Endothelial cell of umbilical vein (primary cell): ENCODE measurements at regions of chr7 and their contacts with region 1.

Region 1: GRCh38 chr7:122528879-122529481 is 169.9 kb downstream of the RNF133 start:
- DNase-seq: peak; percentile 68
- H3K4me3 ChIP-seq: no peak overlapping the region
- H3K27ac ChIP-seq: no peak overlapping the region
- H3K4me1 ChIP-seq: no peaks in the 10 kb centered on the region
- H3K27me3 ChIP-seq: no peaks in the 10 kb centered on the region
- CTCF ChIP-seq: peak; percentile 26 to 28
- POLR2A ChIP-seq: no peak

Region 2: DNA sequence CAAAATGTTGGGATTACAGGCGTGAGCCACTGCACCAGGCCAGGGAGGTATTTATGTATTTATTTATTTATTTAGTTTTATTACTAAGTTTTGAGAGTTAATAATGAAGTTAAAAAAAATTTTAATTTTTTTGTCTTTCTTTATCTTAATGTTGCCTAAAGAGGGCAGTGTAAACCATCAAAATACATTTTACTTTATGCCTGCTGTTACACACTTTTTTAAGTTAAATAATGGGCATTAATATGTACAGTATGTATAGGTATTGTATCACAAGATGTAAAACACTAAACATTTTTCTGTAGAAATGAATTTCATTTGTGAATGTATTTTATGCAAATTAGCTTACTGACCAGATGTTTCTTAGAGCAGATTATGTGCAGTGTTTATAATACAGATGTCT is 514.3 kb before region 1 on chr7:
- CTCF ChIA-PET with region 1: interaction called, 8 read pairs
- POLR2A ChIA-PET with region 1: no interaction called
- dilution Hi-C with region 1: no loop called
- intact Hi-C with region 1: loop called (anchors 2 kb)
- DNase-seq: peak; percentile 7
- H3K4me3 ChIP-seq: no peak overlapping the region
- H3K27ac ChIP-seq: no peak overlapping the region
- H3K4me1 ChIP-seq: no peaks in the 10 kb centered on the region
- H3K27me3 ChIP-seq: no peaks in the 10 kb centered on the region
- CTCF ChIP-seq: no peak
- POLR2A ChIP-seq: no peak

Region 3: DNA sequence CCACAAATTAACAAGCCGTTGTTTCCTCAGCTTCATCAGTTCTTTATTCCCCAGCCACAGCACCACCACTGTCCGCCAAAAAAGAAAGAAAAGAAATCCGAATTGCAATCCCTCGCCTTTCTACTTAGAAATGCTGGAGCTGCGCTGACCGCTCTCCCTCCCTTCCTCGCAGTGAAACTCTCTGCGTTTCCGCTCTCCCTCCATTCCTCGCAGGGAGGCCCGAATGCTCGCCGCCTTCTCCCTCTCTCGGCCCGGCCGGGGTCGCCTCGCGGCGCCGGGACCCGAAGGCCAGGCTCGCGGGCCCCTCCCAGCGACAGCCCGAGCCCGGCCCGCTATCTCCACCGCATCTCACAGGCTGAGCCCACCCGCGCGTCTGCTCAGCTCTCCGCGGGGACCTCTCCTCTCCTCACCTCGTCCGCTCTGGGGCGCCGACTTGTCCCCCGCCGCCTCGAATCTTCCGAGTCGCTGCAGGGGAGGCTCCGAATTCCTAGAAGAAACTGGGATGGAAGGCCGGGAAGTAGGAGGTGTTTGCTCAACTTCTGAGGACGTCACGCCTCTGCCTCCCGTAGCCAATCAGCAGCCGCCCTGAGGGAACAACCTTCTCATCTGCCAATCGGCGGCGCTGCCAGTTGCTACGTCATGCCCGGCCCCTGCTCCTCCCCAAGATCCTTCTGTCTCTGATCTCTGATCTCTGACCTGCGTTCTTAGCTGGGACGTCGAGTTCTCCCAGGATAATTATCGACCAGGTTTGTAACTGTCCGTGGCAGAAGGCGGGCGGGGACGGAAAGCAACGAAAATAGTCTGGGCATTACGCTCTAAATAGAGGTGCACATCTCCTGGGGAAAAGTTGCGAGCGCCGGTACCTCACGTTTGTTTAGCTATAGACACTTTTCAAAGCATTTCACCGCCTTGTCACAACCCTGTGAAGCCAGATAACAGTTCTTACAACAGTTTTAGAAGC is 384.9 kb before region 1 on chr7 and contains the start of gene AASS:
- CTCF ChIA-PET with region 1: interaction called, 3 read pairs
- POLR2A ChIA-PET with region 1: no interaction called
- dilution Hi-C with region 1: no loop called
- intact Hi-C with region 1: loop called (anchors 5 kb)
- DNase-seq: peak; percentile 96
- H3K4me3 ChIP-seq: peak within 1 kb of the TSS; percentile 68 to 92 (median 81)
- H3K27ac ChIP-seq: peak within 1 kb of the TSS; percentile 58
- H3K4me1 ChIP-seq: peaks cover 16% of the 10 kb centered on the region
- H3K27me3 ChIP-seq: no peaks in the 10 kb centered on the region
- CTCF ChIP-seq: no peak
- POLR2A ChIP-seq: peak; percentile 71
- total RNA-seq, gene AASS: 27.8 and 30.1 TPM in 2 replicates

Region 4: DNA sequence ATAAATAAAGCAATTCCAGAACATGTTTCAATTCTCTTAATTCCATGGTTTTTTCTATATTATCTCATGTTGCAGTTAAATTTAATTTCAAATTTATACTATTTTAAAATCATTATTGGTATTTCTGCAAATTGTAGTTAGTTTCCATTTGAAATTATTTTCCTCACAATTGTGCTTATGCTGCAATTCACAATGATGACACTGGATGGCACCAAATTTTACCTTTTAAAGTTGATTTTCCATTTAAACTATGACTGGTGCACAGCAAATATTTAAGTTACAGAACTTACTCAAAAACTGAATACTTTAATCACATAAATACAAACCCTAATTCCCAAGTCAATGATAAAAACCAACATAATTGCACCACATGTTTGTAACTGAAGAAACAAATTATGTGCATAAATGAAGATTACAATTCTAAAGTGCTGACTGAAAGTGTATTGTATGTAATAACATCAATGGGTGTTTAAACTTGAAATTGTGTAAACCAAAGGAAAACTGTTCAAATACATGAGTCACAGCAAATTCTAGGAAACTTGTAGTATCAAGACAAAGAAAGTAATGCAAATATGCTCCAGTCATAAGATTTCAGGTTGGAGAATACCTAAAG is 309.6 kb before region 1 on chr7:
- CTCF ChIA-PET with region 1: interaction called, 375 read pairs
- POLR2A ChIA-PET with region 1: no interaction called
- dilution Hi-C with region 1: no loop called
- intact Hi-C with region 1: loop called (anchors 1 kb)
- DNase-seq: peak; percentile 56
- H3K4me3 ChIP-seq: no peak overlapping the region
- H3K27ac ChIP-seq: no peak overlapping the region
- H3K4me1 ChIP-seq: no peaks in the 10 kb centered on the region
- H3K27me3 ChIP-seq: no peaks in the 10 kb centered on the region
- CTCF ChIP-seq: peak; percentile 30 to 33
- POLR2A ChIP-seq: no peak

Region 5: GRCh38 chr7:122290476-122290875 is 238.5 kb before region 1 on chr7:
- CTCF ChIA-PET with region 1: interaction called, 6 read pairs
- POLR2A ChIA-PET with region 1: no interaction called
- dilution Hi-C with region 1: no loop called
- intact Hi-C with region 1: loop called (anchors 5 kb)
- DNase-seq: no peak
- H3K4me3 ChIP-seq: no peak overlapping the region
- H3K27ac ChIP-seq: no peak overlapping the region
- H3K4me1 ChIP-seq: no peaks in the 10 kb centered on the region
- H3K27me3 ChIP-seq: peaks cover 11 to 42% of the 10 kb centered on the region in 2 experiments
- CTCF ChIP-seq: no peak
- POLR2A ChIP-seq: no peak

Region 6: GRCh38 chr7:122310119-122311021 is 218.6 kb before region 1 on chr7:
- CTCF ChIA-PET with region 1: no interaction called
- POLR2A ChIA-PET with region 1: no interaction called
- dilution Hi-C with region 1: no loop called
- intact Hi-C with region 1: loop called (anchors 5 kb)
- DNase-seq: peak; percentile 38
- H3K4me3 ChIP-seq: peak overlapping the region; percentile 13 to 33 (median 23)
- H3K27ac ChIP-seq: no peak overlapping the region
- H3K4me1 ChIP-seq: peaks cover 14% of the 10 kb centered on the region
- H3K27me3 ChIP-seq: peaks cover 85 to 100% of the 10 kb centered on the region in 2 experiments
- CTCF ChIP-seq: no peak
- POLR2A ChIP-seq: no peak